Activated B cell treated with CpG ODN at 0.5 μM for 24 hours (primary cell): ENCODE measurements at regions of chr15 and their contacts with region 1.

Region 1: DNA sequence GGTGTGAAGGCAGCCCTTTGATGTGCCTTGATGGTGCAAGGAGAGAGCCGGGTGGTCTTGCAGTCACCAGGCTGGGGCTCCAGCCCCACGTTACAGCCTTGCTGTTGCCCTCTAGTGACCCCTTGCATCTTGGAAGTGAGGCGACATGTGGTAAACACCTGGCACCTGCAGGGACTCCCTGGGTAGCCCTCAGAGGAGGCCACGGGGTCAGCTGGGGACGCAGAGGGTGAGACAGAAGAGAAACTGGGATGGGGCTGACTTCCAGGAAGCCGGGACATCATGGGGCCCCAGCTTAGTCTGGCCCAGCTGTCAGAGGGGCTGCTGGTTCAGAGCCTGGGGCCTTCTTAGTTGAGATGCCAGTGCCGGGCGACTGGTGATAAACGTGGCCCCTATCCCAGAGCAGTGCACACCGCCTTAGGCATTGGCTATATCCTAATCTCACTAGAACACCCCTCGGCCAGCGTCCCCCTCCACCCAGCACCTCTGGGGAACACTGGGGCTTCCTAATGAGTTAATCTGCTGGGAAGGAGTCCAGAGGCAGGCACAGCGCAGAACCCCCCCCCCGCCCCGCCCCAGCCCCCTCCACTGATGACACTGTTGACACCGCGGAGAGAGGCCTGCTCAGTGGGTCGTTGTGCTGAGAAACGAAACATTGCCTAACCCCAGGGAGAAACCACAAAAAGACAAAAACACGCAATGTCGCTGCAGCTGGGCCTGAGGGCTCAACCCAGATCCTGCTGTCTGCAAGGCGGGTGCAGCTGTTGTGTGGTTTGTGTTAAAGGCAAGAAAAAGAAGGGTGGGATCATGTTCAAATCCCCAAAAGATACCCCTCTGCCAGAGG is 60.5 kb upstream of the KLF13 start:
- DNase-seq: peak; percentile 62
- ATAC-seq: peak; percentile 59
- H3K4me3 Mint-ChIP-seq: peak overlapping the region; percentile 79
- H3K27ac Mint-ChIP-seq: peak overlapping the region; percentile 93
- H3K4me1 Mint-ChIP-seq: peaks cover 91% of the 10 kb centered on the region
- H3K27me3 Mint-ChIP-seq: no peaks in the 10 kb centered on the region
- CTCF ChIP-seq: no peak

Region 2: GRCh38 chr15:31228985-31229826 is 36.9 kb before region 1 on chr15:
- CTCF ChIA-PET with region 1: interaction called, 39 read pairs
- POLR2A ChIA-PET with region 1: interaction called, 380 read pairs
- intact Hi-C with region 1: loop called (anchors 1 kb)
- DNase-seq: peak; percentile 52
- ATAC-seq: peak; percentile 64
- H3K4me3 Mint-ChIP-seq: peak overlapping the region; percentile 85
- H3K27ac Mint-ChIP-seq: peak overlapping the region; percentile 98
- H3K4me1 Mint-ChIP-seq: peaks cover 96% of the 10 kb centered on the region
- H3K27me3 Mint-ChIP-seq: no peaks in the 10 kb centered on the region
- CTCF ChIP-seq: no peak

Region 3: GRCh38 chr15:31254431-31255175 is 11.5 kb before region 1 on chr15:
- CTCF ChIA-PET with region 1: interaction called, 6 read pairs
- POLR2A ChIA-PET with region 1: interaction called, 45 read pairs
- intact Hi-C with region 1: no loop called
- DNase-seq: no peak
- ATAC-seq: no peak
- H3K4me3 Mint-ChIP-seq: no peak overlapping the region
- H3K27ac Mint-ChIP-seq: peak overlapping the region; percentile 77
- H3K4me1 Mint-ChIP-seq: peaks cover 44% of the 10 kb centered on the region
- H3K27me3 Mint-ChIP-seq: no peaks in the 10 kb centered on the region
- CTCF ChIP-seq: no peak

Region 4: GRCh38 chr15:31308185-31308639 is 42.1 kb after region 1 on chr15:
- CTCF ChIA-PET with region 1: interaction called, 3 read pairs
- POLR2A ChIA-PET with region 1: interaction called, 11 read pairs
- intact Hi-C with region 1: loop called (anchors 2 kb)
- DNase-seq: no peak
- ATAC-seq: peak; percentile 63
- H3K4me3 Mint-ChIP-seq: no peak overlapping the region
- H3K27ac Mint-ChIP-seq: no peak overlapping the region
- H3K4me1 Mint-ChIP-seq: peaks cover 28% of the 10 kb centered on the region
- H3K27me3 Mint-ChIP-seq: peaks cover 3% of the 10 kb centered on the region
- CTCF ChIP-seq: no peak

Region 5: GRCh38 chr15:31435261-31435911 is 169.3 kb after region 1 on chr15:
- CTCF ChIA-PET with region 1: interaction called, 47 read pairs
- POLR2A ChIA-PET with region 1: interaction called, 90 read pairs
- intact Hi-C with region 1: loop called (anchors 1 kb)
- DNase-seq: no peak
- ATAC-seq: peak; percentile 66
- H3K4me3 Mint-ChIP-seq: peak overlapping the region; percentile 80
- H3K27ac Mint-ChIP-seq: peak overlapping the region; percentile 91
- H3K4me1 Mint-ChIP-seq: peaks cover 64% of the 10 kb centered on the region
- H3K27me3 Mint-ChIP-seq: no peaks in the 10 kb centered on the region
- CTCF ChIP-seq: no peak

Region 6: DNA sequence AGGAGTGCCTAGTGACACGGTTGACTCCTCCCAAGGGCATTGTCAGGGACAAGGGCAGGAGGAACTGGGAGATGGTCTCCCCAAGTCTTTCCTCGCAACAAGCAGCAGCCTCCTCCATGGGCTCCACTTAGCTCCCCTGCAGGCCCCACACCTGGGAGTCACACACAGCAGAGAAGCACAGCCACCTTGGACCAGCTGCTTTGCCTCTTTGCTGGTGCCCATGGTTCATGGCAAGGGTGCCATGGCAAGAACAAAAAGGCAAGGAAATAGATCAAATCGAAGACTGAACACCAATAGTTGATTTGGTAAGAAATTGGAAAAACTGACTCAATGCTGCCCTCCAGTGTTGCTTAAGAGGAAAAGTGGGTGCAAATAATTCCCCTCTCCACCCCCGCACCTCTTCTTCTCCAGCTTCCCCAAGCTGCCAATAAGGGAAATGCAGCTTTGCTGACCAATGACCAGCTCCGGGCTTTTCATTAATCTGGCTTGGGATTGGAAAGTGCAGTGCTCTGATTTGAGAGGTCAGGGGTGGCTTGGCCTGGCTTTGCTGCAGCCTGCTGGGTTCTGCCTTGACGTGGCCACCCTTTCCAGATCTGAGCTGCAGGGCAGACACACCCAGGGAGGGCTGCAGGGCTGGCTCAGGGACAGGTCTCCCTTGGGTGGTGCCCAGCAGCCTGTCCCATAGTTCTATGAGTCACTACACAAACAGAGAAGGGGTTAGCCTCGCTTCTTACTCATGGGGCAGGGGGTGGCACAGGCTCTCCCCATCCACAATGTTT is 222.5 kb after region 1 on chr15:
- CTCF ChIA-PET with region 1: interaction called, 41 read pairs
- POLR2A ChIA-PET with region 1: interaction called, 25 read pairs
- intact Hi-C with region 1: loop called (anchors 1 kb)
- DNase-seq: no peak
- ATAC-seq: peak; percentile 69
- H3K4me3 Mint-ChIP-seq: no peak overlapping the region
- H3K27ac Mint-ChIP-seq: no peak overlapping the region
- H3K4me1 Mint-ChIP-seq: peaks cover 22% of the 10 kb centered on the region
- H3K27me3 Mint-ChIP-seq: peaks cover 8% of the 10 kb centered on the region
- CTCF ChIP-seq: peak; percentile 24